A549 (cell line): ENCODE measurements at regions of chr20 and their contacts with region 1.

Region 1: GRCh38 chr20:38412877-38413577 is 22.1 kb downstream of the SNHG17 start:
- DNase-seq: no peak
- ATAC-seq: no peak
- H3K4me3 ChIP-seq: no peak overlapping the region
- H3K27ac ChIP-seq: no peak overlapping the region
- H3K4me1 ChIP-seq: peaks cover 5% of the 10 kb centered on the region; the same call in 2 of the 3 replicates
- CTCF ChIP-seq: no peak
- EP300 ChIP-seq: no peak
- POLR2A ChIP-seq: no peak
- RAD21 ChIP-seq: no peak

Region 2: DNA sequence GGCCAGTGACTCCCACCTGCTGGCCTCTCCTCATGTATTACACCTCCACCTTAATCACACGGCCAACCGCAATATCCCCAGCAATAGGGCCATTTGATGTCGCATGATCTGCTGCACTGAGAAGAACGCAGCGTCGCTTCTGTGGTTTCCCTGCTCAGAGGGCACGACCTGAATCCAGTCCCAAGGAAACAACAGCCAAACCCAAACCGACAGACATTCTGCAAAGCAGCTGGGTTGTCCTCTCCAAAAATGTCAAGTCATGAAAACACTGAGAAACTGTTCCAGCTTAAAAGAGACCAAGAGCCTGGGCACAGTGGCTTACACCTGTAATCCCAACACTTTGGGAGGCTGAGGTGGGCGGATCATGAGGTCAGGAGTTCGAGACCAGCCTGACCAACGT is 116.6 kb before region 1 on chr20:
- CTCF ChIA-PET with region 1: no interaction called
- POLR2A ChIA-PET with region 1: no interaction called
- DNase-seq: no peak
- ATAC-seq: no peak
- H3K4me3 ChIP-seq: no peak overlapping the region
- H3K27ac ChIP-seq: no peak overlapping the region
- H3K4me1 ChIP-seq: no peaks in the 10 kb centered on the region
- CTCF ChIP-seq: no peak
- EP300 ChIP-seq: no peak
- POLR2A ChIP-seq: no peak
- RAD21 ChIP-seq: no peak

Region 3: GRCh38 chr20:38395165-38395564 is 17.9 kb before region 1 on chr20:
- CTCF ChIA-PET with region 1: interaction called, 24 read pairs
- POLR2A ChIA-PET with region 1: no interaction called
- DNase-seq: no peak
- ATAC-seq: no peak
- H3K4me3 ChIP-seq: no peak overlapping the region
- H3K27ac ChIP-seq: no peak overlapping the region
- H3K4me1 ChIP-seq: no peaks in the 10 kb centered on the region
- CTCF ChIP-seq: no peak
- EP300 ChIP-seq: no peak
- POLR2A ChIP-seq: no peak
- RAD21 ChIP-seq: no peak